Mammary epithelial cell (primary cell): ENCODE measurements at regions of chr14 and their contacts with region 1.

Region 1: DNA sequence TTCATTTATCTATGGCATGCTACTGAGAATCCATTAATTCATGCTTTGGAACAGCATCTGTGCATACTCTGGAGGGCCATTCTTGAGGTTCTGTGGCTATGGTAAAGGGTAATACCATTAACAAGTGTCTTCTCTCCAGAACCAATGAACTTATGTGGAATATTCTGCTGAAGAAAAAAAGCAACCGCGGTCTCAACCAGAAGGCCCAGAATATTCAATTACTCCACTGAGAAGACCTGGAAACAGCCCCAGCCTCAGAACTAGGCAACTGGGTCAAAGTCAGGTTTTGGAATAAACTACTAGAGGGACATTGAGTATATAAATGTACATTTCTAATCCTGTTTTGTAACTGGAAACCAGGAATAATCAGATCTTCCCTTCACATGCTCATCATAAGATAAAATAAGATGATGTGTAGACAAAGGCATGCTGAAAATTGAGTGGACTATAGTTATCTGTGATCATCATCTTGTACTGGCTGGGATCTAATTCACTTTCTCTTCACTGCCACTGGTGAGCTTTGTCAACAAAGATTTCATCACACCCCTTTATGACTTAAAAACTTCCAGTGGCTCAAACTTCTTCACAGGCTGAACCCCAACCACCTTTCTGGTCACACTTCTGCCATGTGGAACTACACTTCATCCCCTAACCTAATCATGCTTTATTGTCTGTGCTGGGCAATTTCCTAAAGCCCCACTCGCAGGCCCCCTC is 6.0 kb downstream of the SPTB start:
- DNase-seq: no peak
- H3K4me3 ChIP-seq: no peak overlapping the region
- H3K27ac ChIP-seq: no peak overlapping the region
- H3K4me1 ChIP-seq: no peaks in the 10 kb centered on the region
- H3K27me3 ChIP-seq: peaks cover 6% of the 10 kb centered on the region
- CTCF ChIP-seq: no peak

Region 2: DNA sequence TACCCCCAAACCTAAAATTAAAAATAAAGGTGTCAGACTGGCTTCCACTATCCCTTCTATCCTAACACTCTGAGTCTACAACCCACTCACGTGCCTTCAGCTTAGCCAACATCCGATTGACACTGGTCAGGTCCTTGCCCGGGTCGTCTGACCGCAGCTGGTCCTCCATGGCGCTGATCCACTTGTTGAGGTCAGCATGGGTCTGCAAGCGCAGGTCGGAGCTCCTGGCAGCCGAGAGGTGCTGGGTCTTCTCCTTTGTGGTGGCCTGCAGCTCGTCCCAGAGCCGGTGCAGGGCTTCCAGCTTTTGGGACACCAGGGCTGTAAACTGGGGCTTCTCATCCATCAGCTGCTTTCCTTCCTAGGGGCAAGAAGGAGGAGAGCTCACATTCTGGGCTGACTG is 91.5 kb before region 1 on chr14:
- CTCF ChIA-PET with region 1: no interaction called
- dilution Hi-C with region 1: loop called (anchors 5 kb)
- in situ Hi-C with region 1: no loop called
- intact Hi-C with region 1: no loop called
- DNase-seq: no peak
- H3K4me3 ChIP-seq: no peak overlapping the region
- H3K27ac ChIP-seq: no peak overlapping the region
- H3K4me1 ChIP-seq: peaks cover 8% of the 10 kb centered on the region
- H3K27me3 ChIP-seq: no peaks in the 10 kb centered on the region
- CTCF ChIP-seq: no peak